Naive thymus-derived CD4-positive, alpha-beta T cell (primary cell): ENCODE measurements at regions of chr17 and their contacts with region 1.

Region 1: GRCh38 chr17:48351831-48352332 is 78.1 kb downstream of the SKAP1 start:
- DNase-seq: peak in 7 of 9 donors; percentile 17 to 58 (median 41)
- ATAC-seq: peak; percentile 72
- H3K4me3 ChIP-seq: no peak overlapping the region
- H3K4me3 Mint-ChIP-seq: no peak overlapping the region
- H3K27ac ChIP-seq: no peak overlapping the region
- H3K27ac Mint-ChIP-seq: no peak overlapping the region
- H3K4me1 ChIP-seq: peaks cover 0 to 4% of the 10 kb centered on the region in 2 donors
- H3K4me1 Mint-ChIP-seq: peaks cover 0 to 20% (median 13%) of the 10 kb centered on the region in 7 donors
- H3K27me3 ChIP-seq: no peaks in the 10 kb centered on the region
- H3K27me3 Mint-ChIP-seq: no peaks in the 10 kb centered on the region

Region 2: DNA sequence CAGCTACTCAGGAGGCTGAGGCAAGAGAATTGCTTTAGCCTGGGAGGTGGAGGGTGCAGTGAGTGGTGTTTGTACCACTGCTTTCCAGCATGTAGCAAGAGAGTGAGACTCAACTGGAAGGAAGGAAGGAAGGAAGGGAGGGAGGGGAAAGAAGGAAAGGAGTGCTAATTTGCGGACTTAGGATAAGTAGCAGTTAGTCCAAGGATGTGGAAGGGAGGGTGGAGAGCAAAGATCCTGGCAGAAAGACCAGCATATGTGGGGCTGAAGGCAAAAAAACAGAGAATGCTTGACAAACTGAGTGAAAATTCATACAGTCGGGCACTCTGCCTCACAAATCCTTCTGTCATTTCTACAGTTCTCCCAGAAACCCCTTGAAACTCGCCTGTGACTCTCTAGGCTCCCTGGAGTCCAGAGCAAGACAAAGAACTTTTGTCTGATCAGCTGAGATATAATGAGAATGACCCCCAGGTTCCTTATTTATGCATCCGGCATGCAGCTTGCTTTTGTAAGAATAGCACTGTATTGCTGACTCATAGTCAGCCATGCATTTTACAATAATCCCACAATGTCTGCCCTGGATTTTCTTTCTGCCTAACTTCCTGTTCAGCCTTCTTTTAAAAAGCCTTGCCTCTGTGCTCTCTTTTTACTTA is 349.5 kb before region 1 on chr17:
- CTCF ChIA-PET with region 1: no interaction called
- POLR2A ChIA-PET with region 1: no interaction called
- intact Hi-C with region 1: no loop called
- DNase-seq: no peak
- ATAC-seq: peak; percentile 67
- H3K4me3 ChIP-seq: no peak overlapping the region
- H3K4me3 Mint-ChIP-seq: peak overlapping the region in 1 of 10 donors; percentile 47
- H3K27ac ChIP-seq: no peak overlapping the region
- H3K27ac Mint-ChIP-seq: no peak overlapping the region
- H3K4me1 ChIP-seq: no peaks in the 10 kb centered on the region
- H3K4me1 Mint-ChIP-seq: peaks cover 0 to 23% (median 6%) of the 10 kb centered on the region in 7 donors
- H3K27me3 ChIP-seq: no peaks in the 10 kb centered on the region
- H3K27me3 Mint-ChIP-seq: peaks cover 13 to 25% (median 18%) of the 10 kb centered on the region in 5 donors

Region 3: GRCh38 chr17:48335858-48336500 is 15.9 kb before region 1 on chr17:
- CTCF ChIA-PET with region 1: interaction called, 11 read pairs
- POLR2A ChIA-PET with region 1: no interaction called
- intact Hi-C with region 1: no loop called
- DNase-seq: peak in 7 of 9 donors; percentile 27 to 70 (median 63)
- ATAC-seq: peak; percentile 77
- H3K4me3 ChIP-seq: no peak overlapping the region
- H3K4me3 Mint-ChIP-seq: no peak overlapping the region
- H3K27ac ChIP-seq: no peak overlapping the region
- H3K27ac Mint-ChIP-seq: peak overlapping the region in 1 of 9 donors; percentile 15
- H3K4me1 ChIP-seq: peaks cover 0 to 3% of the 10 kb centered on the region in 2 donors
- H3K4me1 Mint-ChIP-seq: peaks cover 3 to 25% (median 12%) of the 10 kb centered on the region in 7 donors
- H3K27me3 ChIP-seq: no peaks in the 10 kb centered on the region
- H3K27me3 Mint-ChIP-seq: no peaks in the 10 kb centered on the region

Region 4: GRCh38 chr17:48363161-48363560 is 11.3 kb after region 1 on chr17:
- CTCF ChIA-PET with region 1: interaction called, 21 read pairs
- POLR2A ChIA-PET with region 1: no interaction called
- intact Hi-C with region 1: no loop called
- DNase-seq: no peak
- ATAC-seq: no peak
- H3K4me3 ChIP-seq: no peak overlapping the region
- H3K4me3 Mint-ChIP-seq: no peak overlapping the region
- H3K27ac ChIP-seq: no peak overlapping the region
- H3K27ac Mint-ChIP-seq: peak overlapping the region in 2 of 9 donors; percentile 13 to 83
- H3K4me1 ChIP-seq: peaks cover 2 to 3% of the 10 kb centered on the region in 2 donors
- H3K4me1 Mint-ChIP-seq: peaks cover 16 to 64% (median 54%) of the 10 kb centered on the region in 7 donors
- H3K27me3 ChIP-seq: no peaks in the 10 kb centered on the region
- H3K27me3 Mint-ChIP-seq: no peaks in the 10 kb centered on the region

Region 5: DNA sequence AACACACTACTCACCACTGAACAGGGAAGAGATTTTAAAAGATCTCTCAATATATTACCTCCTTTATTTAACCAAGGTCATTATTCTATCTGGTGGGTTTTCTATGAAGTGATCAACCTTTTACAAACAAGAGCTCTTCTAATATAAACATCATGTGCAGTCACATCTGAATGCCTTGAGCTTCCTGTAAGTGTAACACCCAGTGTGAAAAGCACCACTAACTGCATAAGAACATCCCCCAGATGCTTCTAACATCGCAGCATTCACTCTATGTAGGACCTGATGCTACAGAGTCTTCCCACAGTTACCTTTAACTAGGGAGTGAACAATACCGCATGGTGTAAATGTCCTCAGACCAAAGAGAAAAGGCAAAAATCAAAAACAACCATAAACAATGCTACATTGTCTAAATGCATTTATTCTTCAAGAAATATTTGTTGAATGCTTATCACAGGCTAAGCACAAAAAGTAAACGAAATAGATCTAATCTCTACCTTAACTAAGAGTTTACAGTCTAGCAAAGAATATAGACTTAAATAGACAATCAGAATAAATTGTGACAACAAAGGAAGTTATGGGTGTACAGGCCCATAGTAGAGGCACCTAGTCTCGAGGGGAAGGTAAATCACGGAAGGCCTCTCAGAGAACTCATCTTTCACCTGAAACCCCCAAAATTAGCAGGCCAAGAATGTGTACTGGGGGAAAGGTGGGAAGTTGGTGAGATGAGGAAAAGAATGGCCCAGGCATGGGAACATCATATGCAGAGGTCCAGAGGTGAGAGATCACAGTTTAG is 61.9 kb after region 1 on chr17:
- CTCF ChIA-PET with region 1: interaction called, 3 read pairs
- POLR2A ChIA-PET with region 1: no interaction called
- intact Hi-C with region 1: loop called in 1 of 2 experiments (anchors 2 kb)
- DNase-seq: peak in 5 of 9 donors; percentile 12 to 38 (median 16)
- ATAC-seq: peak; percentile 81
- H3K4me3 ChIP-seq: peak overlapping the region; percentile 9
- H3K4me3 Mint-ChIP-seq: peak overlapping the region; percentile 45 to 81 (median 72)
- H3K27ac ChIP-seq: peak overlapping the region; percentile 69
- H3K27ac Mint-ChIP-seq: peak overlapping the region; percentile 85 to 96 (median 91)
- H3K4me1 ChIP-seq: peaks cover 55 to 56% of the 10 kb centered on the region in 2 donors
- H3K4me1 Mint-ChIP-seq: peaks cover 42 to 98% (median 88%) of the 10 kb centered on the region in 7 donors
- H3K27me3 ChIP-seq: no peaks in the 10 kb centered on the region
- H3K27me3 Mint-ChIP-seq: no peaks in the 10 kb centered on the region

Region 6: GRCh38 chr17:48492401-48493298 is 140.8 kb after region 1 on chr17:
- CTCF ChIA-PET with region 1: interaction called, 6 read pairs
- POLR2A ChIA-PET with region 1: no interaction called
- intact Hi-C with region 1: loop called in 1 of 2 experiments (anchors 1 kb)
- DNase-seq: peak; percentile 38 to 73 (median 58)
- ATAC-seq: peak; percentile 95
- H3K4me3 ChIP-seq: peak overlapping the region; percentile 54
- H3K4me3 Mint-ChIP-seq: peak overlapping the region; percentile 6 to 79 (median 58)
- H3K27ac ChIP-seq: no peak overlapping the region
- H3K27ac Mint-ChIP-seq: peak overlapping the region in 1 of 9 donors; percentile 88
- H3K4me1 ChIP-seq: peaks cover 6 to 7% of the 10 kb centered on the region in 2 donors
- H3K4me1 Mint-ChIP-seq: peaks cover 0 to 58% (median 7%) of the 10 kb centered on the region in 7 donors
- H3K27me3 ChIP-seq: no peaks in the 10 kb centered on the region
- H3K27me3 Mint-ChIP-seq: peaks cover 6 to 26% (median 16%) of the 10 kb centered on the region in 5 donors

Region 7: GRCh38 chr17:48586355-48587258 is 234.7 kb after region 1 on chr17:
- CTCF ChIA-PET with region 1: interaction called, 10 read pairs
- POLR2A ChIA-PET with region 1: interaction called, 3 read pairs
- intact Hi-C with region 1: no loop called
- DNase-seq: no peak
- ATAC-seq: no peak
- H3K4me3 ChIP-seq: peak overlapping the region; percentile 60
- H3K4me3 Mint-ChIP-seq: peak overlapping the region; percentile 81 to 97 (median 91)
- H3K27ac ChIP-seq: no peak overlapping the region
- H3K27ac Mint-ChIP-seq: peak overlapping the region in 1 of 9 donors; percentile 52
- H3K4me1 ChIP-seq: peaks cover 9 to 25% of the 10 kb centered on the region in 2 donors
- H3K4me1 Mint-ChIP-seq: peaks cover 17 to 70% (median 31%) of the 10 kb centered on the region in 7 donors
- H3K27me3 ChIP-seq: peaks cover 8 to 37% of the 10 kb centered on the region in 2 donors
- H3K27me3 Mint-ChIP-seq: peaks cover 88 to 97% (median 95%) of the 10 kb centered on the region in 5 donors